ENCODE measurements at regions of chr10 and their contacts with region 1.

Region 1: GRCh38 chr10:25493122-25494009 is 318.6 kb downstream of the GPR158 start:
- DNase-seq: peak; percentile 96
- H3K4me3 ChIP-seq: peak overlapping the region in 1 of 3 experiments; percentile 1
- H3K27ac ChIP-seq: peak overlapping the region; percentile 75
- H3K4me1 ChIP-seq: peaks cover 22% of the 10 kb centered on the region
- H3K27me3 ChIP-seq: no peaks in the 10 kb centered on the region
- CTCF ChIP-seq: no peak
- POLR2A ChIP-seq: no peak

Region 2: GRCh38 chr10:25455980-25456567 is 37.3 kb before region 1 on chr10:
- CTCF ChIA-PET with region 1: interaction called, 3 read pairs
- POLR2A ChIA-PET with region 1: no interaction called
- dilution Hi-C with region 1: no loop called
- intact Hi-C with region 1: loop called (anchors 1 kb)
- DNase-seq: peak; percentile 83
- H3K4me3 ChIP-seq: no peak overlapping the region
- H3K27ac ChIP-seq: peak overlapping the region; percentile 32
- H3K4me1 ChIP-seq: peaks cover 13% of the 10 kb centered on the region
- H3K27me3 ChIP-seq: no peaks in the 10 kb centered on the region
- CTCF ChIP-seq: peak in 1 of 2 donors; percentile 8
- POLR2A ChIP-seq: no peak

Region 3: GRCh38 chr10:25556466-25556865 is 63.1 kb after region 1 on chr10:
- CTCF ChIA-PET with region 1: interaction called, 5 read pairs
- POLR2A ChIA-PET with region 1: no interaction called
- dilution Hi-C with region 1: no loop called
- intact Hi-C with region 1: loop called (anchors 1 kb)
- DNase-seq: peak; percentile 96
- H3K4me3 ChIP-seq: no peak overlapping the region
- H3K27ac ChIP-seq: peak overlapping the region; percentile 72
- H3K4me1 ChIP-seq: peaks cover 18% of the 10 kb centered on the region
- H3K27me3 ChIP-seq: no peaks in the 10 kb centered on the region
- CTCF ChIP-seq: no peak
- POLR2A ChIP-seq: no peak